ENCODE measurements at regions of chr2 and their contacts with region 1.

Region 1: DNA sequence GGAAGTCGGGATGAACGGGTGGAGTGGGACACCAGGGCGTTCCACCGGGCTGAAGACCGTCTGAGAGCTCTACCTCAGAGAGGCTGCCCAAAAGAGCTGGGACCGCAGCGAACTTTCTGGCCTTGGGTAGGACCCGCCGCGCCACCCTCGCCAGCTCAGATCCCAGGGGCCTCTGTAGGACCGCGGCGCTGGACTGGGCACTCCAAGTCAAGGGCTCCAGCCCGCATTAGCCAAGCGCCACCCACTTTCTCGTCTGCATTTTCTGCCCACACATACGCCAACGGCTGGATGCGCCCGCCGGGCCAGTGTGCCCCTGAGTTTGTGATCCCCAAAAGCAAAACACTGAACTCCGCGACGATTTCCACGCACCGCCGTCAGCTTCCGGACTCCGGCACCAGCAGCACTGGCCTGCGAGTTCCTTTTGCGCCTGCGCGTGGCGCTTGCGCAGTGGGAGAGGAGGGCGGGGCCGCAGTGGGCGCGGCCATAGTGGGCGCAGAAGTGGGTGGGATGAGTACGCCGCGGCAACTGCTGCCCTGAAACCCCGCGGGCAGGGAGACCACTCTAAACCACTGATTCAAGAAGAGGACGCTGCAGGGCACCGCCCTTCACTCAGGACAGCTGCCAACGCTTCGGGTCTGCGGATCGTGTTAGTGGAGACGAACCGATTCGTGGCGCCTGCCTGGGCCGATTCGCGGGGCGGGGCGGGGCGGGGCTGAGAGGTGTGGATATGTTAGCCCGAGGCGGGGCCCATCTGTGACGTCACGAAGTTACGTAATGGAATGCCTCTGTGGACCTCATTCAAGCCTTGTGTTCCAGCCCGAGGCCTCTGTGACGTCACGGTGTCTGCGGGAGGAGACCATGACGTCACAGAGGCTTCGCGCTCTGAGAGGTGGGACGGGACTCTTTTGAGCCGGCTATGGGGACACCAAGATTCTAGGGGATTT is 10.5 kb downstream of the OSR1 start:
- DNase-seq: peak; percentile 97
- H3K4me3 Mint-ChIP-seq: peak overlapping the region; percentile 86
- H3K27ac Mint-ChIP-seq: peak overlapping the region; percentile 99
- H3K4me1 Mint-ChIP-seq: peaks cover 31% of the 10 kb centered on the region
- H3K27me3 Mint-ChIP-seq: peaks cover 35% of the 10 kb centered on the region

Region 2: DNA sequence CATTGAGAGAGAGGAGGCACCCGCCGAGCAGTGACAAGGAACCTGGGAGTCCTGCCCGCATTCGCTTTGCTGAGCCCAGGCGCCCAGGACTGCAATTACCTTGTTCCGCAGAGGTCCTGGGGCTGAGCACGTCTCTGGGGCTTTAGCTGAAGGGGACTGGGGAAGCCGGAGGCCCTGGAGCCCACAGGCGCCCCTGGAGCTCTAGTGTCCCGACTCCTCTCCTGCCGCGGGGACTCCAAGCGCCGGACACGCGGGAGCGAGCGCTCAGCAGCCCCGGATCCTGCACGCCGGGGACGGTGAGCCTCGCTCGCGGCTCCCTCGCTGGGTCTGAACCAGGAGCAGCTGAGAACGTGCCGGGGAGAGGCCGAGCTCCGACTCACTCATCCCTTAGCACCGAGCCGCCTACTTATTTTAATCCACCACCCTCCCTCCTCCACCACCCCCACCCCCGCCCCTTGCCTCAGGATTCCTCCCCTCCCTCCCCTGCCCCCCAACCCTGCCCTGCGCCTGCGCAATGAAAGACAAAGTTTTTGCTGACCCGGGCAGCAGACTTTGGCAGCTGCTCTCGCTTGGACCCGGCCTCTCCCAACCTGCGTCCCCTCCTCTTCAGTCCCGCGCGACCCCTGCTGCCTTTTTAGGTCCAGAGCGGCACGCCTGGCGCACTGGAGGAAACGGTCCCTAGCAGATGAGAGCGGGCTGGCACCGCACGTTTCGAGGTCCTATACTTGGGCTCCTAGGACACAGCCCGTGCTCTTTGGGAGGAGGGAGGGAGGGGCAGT is 10.5 kb after region 1 on chr2 and contains the start of gene OSR1:
- CTCF ChIA-PET with region 1: interaction called, 15 read pairs
- POLR2A ChIA-PET with region 1: no interaction called
- DNase-seq: no peak
- H3K4me3 Mint-ChIP-seq: peak within 1 kb of the TSS; percentile 30
- H3K27ac Mint-ChIP-seq: no peak within 1 kb of the TSS
- H3K4me1 Mint-ChIP-seq: peaks cover 42% of the 10 kb centered on the region
- H3K27me3 Mint-ChIP-seq: peaks cover 95% of the 10 kb centered on the region
- total RNA-seq, gene OSR1: not detected

Measured in activated CD4-positive, alpha-beta T cell treated with anti-CD3 and anti-CD28 coated beads, Interleukin-2, amount 10 ng/mL, durations not matched to agents 7 days and 5 days (primary cell).